ENCODE measurements at regions of chr3 and their contacts with region 1.

Region 1: DNA sequence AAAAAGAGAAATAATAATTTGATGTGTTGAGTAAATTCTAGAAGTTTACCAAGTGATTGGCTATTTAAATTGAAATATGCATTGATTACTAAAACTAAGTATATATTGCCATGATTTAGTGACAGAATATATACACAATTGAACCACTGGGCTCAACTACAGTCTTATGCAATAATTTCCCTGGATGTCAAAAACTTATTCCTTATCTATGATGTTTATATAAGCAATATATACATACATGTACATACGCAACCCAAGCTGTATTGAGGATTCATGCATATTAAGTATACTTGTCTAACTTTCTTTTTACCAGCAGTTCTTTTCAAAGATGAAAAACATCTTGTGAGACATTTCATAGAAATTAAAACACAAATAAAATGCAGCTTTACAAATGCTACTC is 165.8 kb downstream of the ZIC4 start:
- DNase-seq: no peak
- H3K4me3 ChIP-seq: no peak overlapping the region
- CTCF ChIP-seq: no peak
- POLR2A ChIP-seq: no peak

Region 2: GRCh38 chr3:147267434-147267833 is 26.9 kb after region 1 on chr3:
- intact Hi-C with region 1: loop called (anchors 2 kb)
- DNase-seq: no peak
- H3K4me3 ChIP-seq: no peak overlapping the region
- CTCF ChIP-seq: no peak
- POLR2A ChIP-seq: no peak

Measured in lower leg skin (tissue), 4 donors.